HEK293T (cell line): ENCODE measurements at regions of chr1 and their contacts with region 1.

Region 1: GRCh38 chr1:153626922-153627796 is at the start of gene S100A13:
- DNase-seq: peak; percentile 94

Region 2: DNA sequence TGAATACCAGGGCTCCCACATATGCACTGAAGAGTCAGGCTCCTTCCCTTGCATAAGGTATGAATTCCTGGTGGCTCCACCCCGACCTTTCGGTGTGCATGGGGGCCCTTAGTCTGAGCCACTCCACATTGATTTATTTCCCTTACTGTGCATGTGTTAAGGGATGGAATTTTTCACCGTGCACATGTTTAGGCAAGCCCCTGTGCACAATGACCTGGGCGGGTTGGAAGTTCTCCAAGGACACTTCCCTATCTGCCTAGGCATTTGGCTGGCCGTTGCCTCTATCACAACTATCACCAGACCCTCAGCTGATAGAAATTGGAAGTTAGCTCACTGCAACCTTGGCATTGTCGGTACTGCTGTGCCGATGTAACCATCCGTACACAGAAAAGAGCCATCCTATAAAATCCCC is 101.0 kb before region 1 on chr1:
- CTCF ChIA-PET with region 1: interaction called, 11 read pairs
- POLR2A ChIA-PET with region 1: interaction called, 23 read pairs
- DNase-seq: no peak

Region 3: GRCh38 chr1:153572569-153573015 is 54.6 kb before region 1 on chr1:
- CTCF ChIA-PET with region 1: interaction called, 15 read pairs
- POLR2A ChIA-PET with region 1: interaction called, 15 read pairs
- DNase-seq: no peak

Region 4: DNA sequence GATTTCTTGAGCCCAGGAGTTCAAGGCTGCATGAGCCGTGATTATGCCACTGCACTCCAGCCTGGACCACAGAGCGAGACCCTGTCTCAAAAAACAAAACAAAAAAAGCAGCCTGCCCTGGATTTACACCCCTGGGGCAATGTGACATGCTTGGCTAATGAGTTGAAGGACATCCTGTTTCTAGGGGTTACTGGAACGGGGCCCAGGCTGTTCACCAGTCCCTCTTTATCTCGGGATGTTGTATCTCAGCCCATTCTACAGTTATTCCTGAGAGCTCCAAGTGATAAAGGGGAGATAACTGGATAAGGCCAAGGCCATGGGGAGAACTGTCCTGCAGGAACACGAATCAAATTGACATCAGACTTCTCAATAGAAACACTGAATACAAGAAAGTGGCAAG is 39.8 kb before region 1 on chr1:
- CTCF ChIA-PET with region 1: interaction called, 9 read pairs
- POLR2A ChIA-PET with region 1: interaction called, 17 read pairs
- DNase-seq: peak; percentile 5

Region 5: DNA sequence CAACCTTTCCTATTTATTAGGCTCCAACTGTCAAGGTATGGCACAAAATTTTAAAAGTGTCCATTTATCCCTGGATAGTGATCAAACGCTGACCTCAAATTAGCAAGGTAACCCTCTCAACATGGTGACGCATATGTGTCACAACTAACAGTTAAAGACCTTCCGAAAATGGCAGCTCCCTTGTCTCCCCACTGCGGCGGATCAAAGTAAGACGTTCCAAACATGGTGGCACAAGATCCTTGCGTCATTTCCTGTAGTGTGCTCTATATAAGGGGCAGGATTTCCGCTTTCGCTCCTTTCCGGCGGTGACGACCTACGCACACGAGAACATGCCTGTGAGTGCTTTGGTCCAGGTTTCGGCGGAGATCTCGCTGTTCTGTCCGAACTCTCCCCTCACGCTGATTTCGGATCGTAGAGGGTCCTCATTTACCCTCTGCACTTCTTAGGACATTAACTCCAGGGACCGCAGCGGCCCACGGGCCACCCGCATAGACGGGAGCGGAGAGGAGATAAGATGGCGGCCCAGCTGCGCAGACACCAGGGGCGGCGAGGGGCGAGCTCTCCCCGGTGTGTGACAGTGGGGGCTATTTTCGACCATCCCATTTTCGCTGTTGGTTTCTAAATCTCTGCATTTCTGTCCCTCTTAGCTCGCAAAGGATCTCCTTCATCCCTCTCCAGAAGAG is 363.4 kb after region 1 on chr1 and contains the start of gene RPS27:
- CTCF ChIA-PET with region 1: no interaction called
- POLR2A ChIA-PET with region 1: interaction called, 12 read pairs
- DNase-seq: peak; percentile 98